ENCODE measurements at regions of chr1 and their contacts with region 1.

Region 1: GRCh38 chr1:28642847-28643635 is at the start of gene TAF12:
- DNase-seq: peak; percentile 92 to 94
- H3K4me3 ChIP-seq: peak within 1 kb of the TSS; percentile 94
- H3K4me1 ChIP-seq: peaks cover 16% of the 10 kb centered on the region
- H3K27me3 ChIP-seq: no peaks in the 10 kb centered on the region

Region 2: DNA sequence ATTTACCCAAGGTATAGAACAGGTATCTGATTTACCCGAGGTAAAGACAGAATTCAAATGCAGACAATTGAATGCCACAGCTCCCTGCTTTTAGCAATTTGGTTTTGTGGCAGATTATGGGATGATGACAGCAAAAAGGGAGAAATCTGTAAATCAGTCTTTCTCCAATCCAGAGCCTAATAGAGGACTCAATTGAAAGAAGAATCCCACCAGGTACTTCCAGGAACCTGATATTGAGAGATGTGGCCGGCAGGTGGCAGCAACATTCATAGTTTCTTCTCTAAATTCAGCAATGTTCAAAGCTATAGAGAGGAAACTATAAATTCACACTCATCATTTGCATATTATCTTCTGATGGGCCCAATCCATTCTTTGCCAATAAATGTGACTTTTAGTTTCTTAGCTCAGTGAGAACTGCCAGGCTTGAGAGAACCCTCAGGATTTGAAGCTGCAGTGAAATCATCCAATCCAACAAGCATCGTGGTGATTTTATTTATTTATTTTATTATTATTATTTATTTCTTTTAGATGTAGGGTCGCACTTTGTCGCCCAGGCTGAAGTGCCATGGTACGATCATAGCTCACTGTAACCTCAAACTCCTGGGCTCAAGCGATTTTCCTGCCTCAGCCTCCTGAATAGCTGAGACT is 283.3 kb before region 1 on chr1:
- in situ Hi-C with region 1: no loop called
- DNase-seq: peak; percentile 81 to 84
- H3K4me3 ChIP-seq: no peak overlapping the region
- H3K4me1 ChIP-seq: no peaks in the 10 kb centered on the region
- H3K27me3 ChIP-seq: no peaks in the 10 kb centered on the region

Region 3: DNA sequence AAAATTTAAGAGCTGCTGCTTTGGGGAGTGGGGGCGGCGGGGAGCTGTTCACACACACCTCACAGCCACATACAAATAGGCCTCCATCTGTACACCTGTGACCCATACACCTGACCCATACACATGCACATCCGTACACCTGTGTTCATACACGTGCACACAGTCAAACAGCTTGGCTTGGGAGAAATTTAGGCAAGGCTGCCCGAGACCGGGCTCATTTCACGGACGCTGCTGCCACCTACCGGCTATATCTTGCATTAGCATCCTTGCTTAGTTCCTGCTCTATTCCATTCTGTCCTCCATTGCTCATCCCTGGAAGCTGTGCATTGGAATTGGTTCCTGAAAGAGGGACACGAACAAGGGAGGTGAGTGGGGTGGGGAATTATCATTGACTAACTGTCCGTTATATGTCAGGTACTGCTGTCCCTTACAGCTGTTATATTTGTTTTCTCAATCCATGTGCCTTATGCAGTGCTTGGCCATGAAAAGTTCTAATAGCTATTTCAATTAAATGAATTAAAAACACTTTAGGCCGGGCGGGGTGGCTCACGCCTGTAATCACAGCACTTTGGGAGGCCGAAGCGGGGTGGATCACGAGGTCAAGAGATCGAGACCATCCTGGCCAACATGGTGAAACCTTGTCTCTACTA is 234.2 kb after region 1 on chr1:
- in situ Hi-C with region 1: loop called (anchors 10 kb)
- DNase-seq: peak; percentile 79 to 85
- H3K4me3 ChIP-seq: no peak overlapping the region
- H3K4me1 ChIP-seq: peaks cover under 1% of the 10 kb centered on the region; the same call in 1 of the 2 replicates
- H3K27me3 ChIP-seq: no peaks in the 10 kb centered on the region; the same call in 1 of the 2 replicates

Region 4: GRCh38 chr1:29105839-29106238 is 462.8 kb after region 1 on chr1:
- in situ Hi-C with region 1: no loop called
- DNase-seq: no peak
- H3K4me3 ChIP-seq: no peak overlapping the region
- H3K4me1 ChIP-seq: no peaks in the 10 kb centered on the region
- H3K27me3 ChIP-seq: no peaks in the 10 kb centered on the region

Region 5: GRCh38 chr1:29181413-29182225 is 538.6 kb after region 1 on chr1 and contains the start of gene SRSF4:
- in situ Hi-C with region 1: loop called (anchors 10 kb)
- DNase-seq: peak; percentile 98 to 100
- H3K4me3 ChIP-seq: peak within 1 kb of the TSS; percentile 99
- H3K4me1 ChIP-seq: peaks cover 33% of the 10 kb centered on the region
- H3K27me3 ChIP-seq: no peaks in the 10 kb centered on the region